Activated CD4-positive, alpha-beta T cell treated with anti-CD3 and anti-CD28 coated beads, Interleukin-2, amount 10 ng/mL, durations not matched to agents 24 days and 14 days (primary cell): ENCODE measurements at regions of chr13 and their contacts with region 1.

Region 1: DNA sequence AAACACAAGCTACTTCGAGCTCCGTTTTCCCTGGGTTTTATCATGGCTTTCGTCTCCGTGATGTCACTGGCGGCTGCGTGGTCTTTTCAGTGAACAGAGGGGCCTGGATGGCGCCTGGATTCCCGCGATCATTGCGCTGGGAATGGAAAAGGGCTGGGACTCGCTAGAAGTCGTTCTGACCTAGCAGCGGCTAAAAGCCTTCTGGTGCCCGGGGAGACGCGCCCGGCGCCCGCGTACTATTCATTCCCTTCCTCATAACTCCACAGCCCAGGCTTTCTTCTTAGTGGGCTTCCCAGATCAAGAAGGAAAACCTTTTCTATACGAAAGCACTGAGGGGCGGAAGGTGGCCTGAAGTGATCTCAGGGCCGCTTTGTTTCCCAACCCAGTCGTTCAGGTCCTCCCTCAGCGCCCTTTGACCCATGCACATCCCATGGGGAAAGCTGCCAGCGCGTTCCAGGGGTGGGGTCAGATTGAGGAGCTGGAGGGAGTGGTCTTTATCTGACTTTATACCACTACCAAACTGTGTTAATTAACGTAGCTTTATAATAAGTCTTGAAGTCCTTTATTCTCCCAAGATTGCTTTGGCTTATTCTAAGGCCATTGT is 96.6 kb downstream of the ELF1 start:
- DNase-seq: no peak
- H3K4me3 Mint-ChIP-seq: peak overlapping the region; percentile 73
- H3K27ac Mint-ChIP-seq: peak overlapping the region; percentile 80
- H3K4me1 Mint-ChIP-seq: peaks cover 13% of the 10 kb centered on the region
- H3K27me3 Mint-ChIP-seq: no peaks in the 10 kb centered on the region

Region 2: GRCh38 chr13:40789275-40790133 is 133.0 kb before region 1 on chr13 and contains the start of gene SLC25A15:
- intact Hi-C with region 1: loop called (anchors 5 kb)
- DNase-seq: peak; percentile 94
- H3K4me3 Mint-ChIP-seq: peak within 1 kb of the TSS; percentile 79
- H3K27ac Mint-ChIP-seq: peak within 1 kb of the TSS; percentile 80
- H3K4me1 Mint-ChIP-seq: peaks cover 21% of the 10 kb centered on the region
- H3K27me3 Mint-ChIP-seq: no peaks in the 10 kb centered on the region
- total RNA-seq, gene SLC25A15: 22.8 and 24.2 TPM in 2 replicates

Region 3: DNA sequence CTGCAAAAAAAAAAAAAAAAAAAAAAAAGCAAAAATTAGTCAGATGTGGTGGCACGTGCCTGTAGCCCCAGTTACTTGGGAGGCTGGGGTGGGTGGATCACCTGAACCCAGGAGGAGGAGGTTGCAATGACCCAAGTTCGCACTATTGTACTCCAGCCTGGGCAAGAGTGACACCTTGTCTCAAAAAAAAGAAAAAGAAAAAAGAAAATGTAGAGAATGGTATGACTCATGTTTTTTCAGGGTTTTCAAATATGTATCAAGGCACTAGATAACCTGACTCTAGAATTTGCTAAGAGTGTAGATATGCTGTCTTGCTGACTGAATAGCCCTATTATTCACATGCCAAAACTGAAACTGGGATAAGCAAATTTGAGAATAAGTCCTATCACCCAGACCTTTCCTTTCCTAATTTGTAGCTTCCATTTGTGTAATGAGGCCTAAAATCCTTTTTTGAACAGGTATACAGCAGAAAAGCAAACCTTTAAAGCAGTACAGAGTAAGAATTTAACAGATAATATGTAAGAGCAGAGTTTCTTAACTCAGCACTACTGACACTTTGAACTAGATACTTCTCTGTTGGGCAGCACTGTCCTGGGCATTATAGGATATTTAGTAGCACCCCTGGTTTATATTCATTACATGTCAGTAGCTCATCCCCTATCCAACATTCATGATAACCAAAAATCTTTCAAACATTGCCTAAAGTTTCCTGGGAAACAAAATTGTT is 12.1 kb before region 1 on chr13:
- intact Hi-C with region 1: loop called (anchors 1 kb)
- DNase-seq: no peak
- H3K4me3 Mint-ChIP-seq: no peak overlapping the region
- H3K27ac Mint-ChIP-seq: no peak overlapping the region
- H3K4me1 Mint-ChIP-seq: peaks cover 9% of the 10 kb centered on the region
- H3K27me3 Mint-ChIP-seq: no peaks in the 10 kb centered on the region

Region 4: GRCh38 chr13:41013835-41014234 is 91.3 kb after region 1 on chr13:
- intact Hi-C with region 1: loop called (anchors 2 kb)
- DNase-seq: no peak
- H3K4me3 Mint-ChIP-seq: peak overlapping the region; percentile 95
- H3K27ac Mint-ChIP-seq: peak overlapping the region; percentile 59
- H3K4me1 Mint-ChIP-seq: peaks cover 54% of the 10 kb centered on the region
- H3K27me3 Mint-ChIP-seq: no peaks in the 10 kb centered on the region